ENCODE measurements at regions of chr12 and their contacts with region 1.

Region 1: DNA sequence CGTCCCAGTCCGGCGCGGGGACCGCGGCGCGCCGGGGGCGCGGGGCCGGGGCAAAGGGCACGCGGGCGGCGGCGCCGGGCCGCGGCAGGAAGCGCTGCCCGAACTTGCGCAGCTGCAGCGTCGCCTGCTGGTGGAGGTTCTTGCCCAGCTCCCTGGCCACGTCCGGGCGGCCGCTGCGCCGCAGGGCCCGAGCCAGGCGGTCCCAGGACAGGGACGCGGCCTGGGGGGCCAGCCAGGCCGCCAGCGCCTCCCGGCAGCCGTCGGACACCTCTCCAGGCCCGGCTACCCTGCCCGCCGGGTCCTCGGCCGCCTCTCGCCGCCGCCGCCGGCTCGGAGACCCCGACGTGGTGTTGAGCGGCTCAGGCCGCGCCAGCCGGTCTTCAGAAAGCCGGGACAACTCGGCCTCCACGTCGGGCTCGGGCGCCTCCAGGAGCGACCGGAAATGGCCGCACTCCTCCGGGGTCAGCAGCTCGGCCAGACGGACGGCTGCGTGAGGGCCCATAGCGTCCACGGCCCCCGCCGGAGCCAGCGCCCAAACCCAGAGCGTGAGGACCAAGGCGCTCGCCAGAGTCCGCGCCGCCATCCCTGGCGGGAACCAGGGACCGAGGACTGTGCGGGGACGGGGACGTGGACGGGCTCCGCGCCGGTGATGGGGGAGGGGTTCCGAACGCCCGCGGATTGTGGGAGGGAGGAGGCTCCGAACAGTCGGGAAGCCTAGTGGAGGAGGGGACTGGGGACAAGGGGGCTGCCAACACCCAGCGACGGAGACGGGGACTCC is 34.0 kb downstream of the FIGNL2 start:
- DNase-seq: peak; percentile 72
- H3K4me3 ChIP-seq: peak overlapping the region; percentile 40 to 46 (median 46)
- H3K27ac ChIP-seq: peak overlapping the region; percentile 74
- H3K4me1 ChIP-seq: peaks cover 9% of the 10 kb centered on the region
- H3K27me3 ChIP-seq: no peaks in the 10 kb centered on the region
- CTCF ChIP-seq: peak; percentile 73 to 80
- POLR2A ChIP-seq: peak; percentile 55

Region 2: GRCh38 chr12:51391283-51392162 is 423.0 kb before region 1 on chr12 and contains the start of gene GALNT6:
- CTCF ChIA-PET with region 1: no interaction called
- POLR2A ChIA-PET with region 1: interaction called, 10 read pairs
- dilution Hi-C with region 1: no loop called
- intact Hi-C with region 1: no loop called
- DNase-seq: peak; percentile 29
- H3K4me3 ChIP-seq: peak within 1 kb of the TSS; percentile 66 to 72 (median 71)
- H3K27ac ChIP-seq: peak within 1 kb of the TSS; percentile 67
- H3K4me1 ChIP-seq: peaks cover 43% of the 10 kb centered on the region
- H3K27me3 ChIP-seq: no peaks in the 10 kb centered on the region
- CTCF ChIP-seq: no peak
- POLR2A ChIP-seq: no peak
- total RNA-seq, gene GALNT6: 38.3 and 39.2 TPM in 2 replicates

Region 3: DNA sequence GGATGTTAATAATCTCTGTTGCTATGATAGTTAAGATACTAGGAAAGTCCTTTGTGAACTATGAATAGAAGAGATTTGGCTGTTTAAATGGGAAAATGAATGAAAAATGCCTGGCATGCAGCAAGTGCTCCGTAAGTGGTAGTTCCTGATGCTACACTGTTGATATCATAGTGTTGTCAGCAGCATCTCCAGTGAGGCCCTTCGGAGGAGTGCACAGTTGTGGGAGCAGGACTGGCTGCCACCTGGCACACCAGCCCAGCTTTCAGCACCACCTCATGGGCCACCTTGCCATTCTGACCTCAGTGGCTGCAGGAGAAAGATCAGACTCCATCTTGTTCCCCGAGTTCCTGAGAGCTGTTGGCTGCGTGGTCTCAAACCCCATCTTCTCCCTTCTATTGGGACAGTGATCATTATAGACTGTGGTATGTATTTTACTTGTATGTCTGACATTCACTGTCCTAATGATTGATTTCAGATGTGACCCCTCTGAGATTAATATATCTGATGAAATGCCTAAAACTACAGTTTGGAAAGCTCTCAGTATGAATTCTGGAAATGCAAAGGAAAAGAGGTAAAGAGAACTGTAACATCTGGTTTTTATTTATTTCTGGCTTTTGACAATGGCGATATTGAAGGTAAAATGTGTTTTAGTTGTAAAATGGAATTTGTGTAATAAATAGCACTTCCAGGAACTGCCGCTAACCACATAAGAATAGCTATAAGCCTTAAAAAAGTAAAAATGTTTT is 309.0 kb before region 1 on chr12:
- CTCF ChIA-PET with region 1: no interaction called
- POLR2A ChIA-PET with region 1: no interaction called
- dilution Hi-C with region 1: no loop called
- intact Hi-C with region 1: no loop called
- DNase-seq: no peak
- H3K4me3 ChIP-seq: no peak overlapping the region
- H3K27ac ChIP-seq: no peak overlapping the region
- H3K4me1 ChIP-seq: no peaks in the 10 kb centered on the region
- H3K27me3 ChIP-seq: no peaks in the 10 kb centered on the region
- CTCF ChIP-seq: no peak
- POLR2A ChIP-seq: no peak

Region 4: DNA sequence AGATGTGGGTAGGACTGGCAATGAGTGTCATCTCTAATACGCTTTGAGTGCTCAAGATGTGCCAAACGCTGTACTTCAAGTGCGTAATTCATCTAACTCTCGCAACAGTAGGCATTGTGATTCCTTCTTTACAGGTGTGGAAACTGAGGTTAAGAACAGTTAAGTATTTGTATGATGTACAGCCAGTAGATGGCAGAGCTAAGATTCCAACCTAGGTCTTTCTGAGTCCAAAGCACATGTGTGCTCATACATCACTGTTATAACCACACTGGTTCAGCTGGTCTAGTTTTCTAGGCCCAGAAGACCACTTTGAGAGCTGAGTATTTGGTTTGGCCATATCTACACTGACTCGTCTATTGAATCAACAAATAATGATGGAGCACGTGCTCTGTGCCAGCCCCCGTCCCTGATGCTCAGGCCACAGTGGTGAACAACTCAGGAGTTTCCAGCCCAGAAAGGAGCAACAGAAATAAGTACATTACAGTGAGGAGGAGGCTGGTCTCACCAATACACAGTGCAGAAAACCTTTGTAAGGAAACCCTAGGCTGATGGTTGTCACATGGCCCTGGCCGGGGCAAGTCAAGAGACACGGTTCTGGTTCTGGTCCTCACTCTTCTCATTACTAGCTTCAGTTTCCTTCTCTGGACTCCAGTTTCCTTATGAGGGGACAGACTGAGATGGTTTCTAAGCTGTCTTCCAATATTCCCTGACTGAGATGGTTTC is 292.8 kb before region 1 on chr12:
- CTCF ChIA-PET with region 1: interaction called, 22 read pairs
- POLR2A ChIA-PET with region 1: no interaction called
- dilution Hi-C with region 1: no loop called
- intact Hi-C with region 1: no loop called
- DNase-seq: peak; percentile 10
- H3K4me3 ChIP-seq: no peak overlapping the region
- H3K27ac ChIP-seq: no peak overlapping the region
- H3K4me1 ChIP-seq: no peaks in the 10 kb centered on the region
- H3K27me3 ChIP-seq: peaks cover 0 to 7% of the 10 kb centered on the region in 2 experiments
- CTCF ChIP-seq: peak in 1 of 2 donors; percentile 12
- POLR2A ChIP-seq: no peak

Region 5: GRCh38 chr12:51590347-51591019 is 224.0 kb before region 1 on chr12:
- CTCF ChIA-PET with region 1: interaction called, 6 read pairs
- POLR2A ChIA-PET with region 1: no interaction called
- dilution Hi-C with region 1: no loop called
- intact Hi-C with region 1: loop called (anchors 1 kb)
- DNase-seq: peak; percentile 64
- H3K4me3 ChIP-seq: peak overlapping the region; percentile 34 to 85 (median 58)
- H3K27ac ChIP-seq: no peak overlapping the region
- H3K4me1 ChIP-seq: peaks cover 6% of the 10 kb centered on the region
- H3K27me3 ChIP-seq: peaks cover 17 to 20% of the 10 kb centered on the region in 2 experiments
- CTCF ChIP-seq: peak; percentile 61 to 69
- POLR2A ChIP-seq: no peak

Region 6: DNA sequence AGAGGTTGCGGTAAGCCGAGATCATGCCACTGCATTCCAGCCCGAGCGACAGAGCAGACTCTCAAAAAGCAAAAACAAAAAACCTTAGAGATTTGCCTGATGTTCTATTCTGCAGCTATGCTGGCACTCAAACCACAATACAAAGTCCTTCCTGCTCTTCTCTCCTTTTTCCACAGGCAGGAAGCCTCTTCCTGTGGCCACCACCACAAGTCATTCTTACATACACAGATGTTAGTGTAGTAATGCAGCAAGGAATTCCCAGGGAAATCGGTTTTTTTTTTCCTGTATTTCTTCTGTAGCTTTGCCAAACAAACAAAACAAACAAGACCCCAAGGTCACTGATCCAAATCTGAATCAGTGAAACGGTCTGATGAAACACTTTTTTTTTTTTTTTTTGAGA is 70.3 kb before region 1 on chr12:
- CTCF ChIA-PET with region 1: interaction called, 7 read pairs
- POLR2A ChIA-PET with region 1: no interaction called
- dilution Hi-C with region 1: no loop called
- intact Hi-C with region 1: loop called (anchors 5 kb)
- DNase-seq: peak; percentile 91
- H3K4me3 ChIP-seq: no peak overlapping the region
- H3K27ac ChIP-seq: peak overlapping the region; percentile 77
- H3K4me1 ChIP-seq: peaks cover 20% of the 10 kb centered on the region
- H3K27me3 ChIP-seq: no peaks in the 10 kb centered on the region
- CTCF ChIP-seq: no peak
- POLR2A ChIP-seq: no peak

Region 7: GRCh38 chr12:51846911-51847642 is 32.6 kb after region 1 on chr12:
- CTCF ChIA-PET with region 1: no interaction called
- POLR2A ChIA-PET with region 1: no interaction called
- dilution Hi-C with region 1: no loop called
- intact Hi-C with region 1: no loop called
- DNase-seq: peak; percentile 50
- H3K4me3 ChIP-seq: peak overlapping the region; percentile 62 to 84 (median 73)
- H3K27ac ChIP-seq: no peak overlapping the region
- H3K4me1 ChIP-seq: peaks cover 9% of the 10 kb centered on the region
- H3K27me3 ChIP-seq: peaks cover 4 to 12% of the 10 kb centered on the region in 2 experiments
- CTCF ChIP-seq: no peak
- POLR2A ChIP-seq: peak; percentile 21

Measured in endothelial cell of umbilical vein (primary cell).